OCI-LY7 (cell line): ENCODE measurements at regions of chr11 and their contacts with region 1.

Region 1: DNA sequence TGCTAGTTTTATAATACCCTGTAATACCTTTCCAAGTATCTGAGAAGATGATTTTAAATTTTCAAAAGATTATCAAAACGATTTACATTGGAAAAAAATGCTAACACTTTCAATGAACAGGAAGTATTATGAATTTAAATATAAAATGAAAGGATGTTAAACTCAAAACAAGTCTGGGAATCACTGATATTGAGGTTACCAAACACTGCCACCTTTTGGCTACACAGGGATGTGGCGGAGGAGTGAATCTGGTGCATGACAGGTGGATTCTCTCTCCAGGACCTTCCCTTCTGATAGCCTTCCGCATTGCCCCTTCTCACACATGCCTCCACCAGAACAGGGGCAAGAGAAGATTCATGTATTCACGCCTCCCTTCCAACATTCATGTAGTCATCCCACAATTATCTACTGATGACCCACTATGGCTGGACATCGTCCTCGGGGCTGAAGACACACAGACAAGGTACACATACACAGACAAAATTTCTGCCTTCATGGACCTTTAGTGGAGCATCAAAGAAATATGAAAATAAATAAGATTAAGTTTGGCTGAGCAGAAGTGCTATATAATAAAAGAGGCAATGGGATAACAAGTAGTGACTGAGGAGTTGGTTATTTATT is 34.7 kb downstream of the ATG16L2 start:
- DNase-seq: peak; percentile 36
- H3K4me3 ChIP-seq: no peak overlapping the region
- H3K27ac ChIP-seq: no peak overlapping the region
- H3K4me1 ChIP-seq: no peaks in the 10 kb centered on the region
- CTCF ChIP-seq: peak; percentile 81

Region 2: GRCh38 chr11:72823105-72824056 is 25.6 kb before region 1 on chr11:
- CTCF ChIA-PET with region 1: no interaction called
- POLR2A ChIA-PET with region 1: no interaction called
- intact Hi-C with region 1: loop called (anchors 1 kb)
- DNase-seq: no peak
- H3K4me3 ChIP-seq: no peak overlapping the region
- H3K27ac ChIP-seq: peak overlapping the region; percentile 59
- H3K4me1 ChIP-seq: peaks cover 22% of the 10 kb centered on the region
- CTCF ChIP-seq: no peak